ENCODE measurements at regions of chr5 and their contacts with region 1.

Region 1: GRCh38 chr5:32388432-32389129 is 56.0 kb downstream of the ZFR start:
- DNase-seq: no peak
- ATAC-seq: peak; percentile 75
- H3K4me3 Mint-ChIP-seq: no peak overlapping the region
- H3K27ac Mint-ChIP-seq: peak overlapping the region; percentile 88
- H3K4me1 Mint-ChIP-seq: peaks cover 11% of the 10 kb centered on the region
- H3K27me3 Mint-ChIP-seq: no peaks in the 10 kb centered on the region

Region 2: DNA sequence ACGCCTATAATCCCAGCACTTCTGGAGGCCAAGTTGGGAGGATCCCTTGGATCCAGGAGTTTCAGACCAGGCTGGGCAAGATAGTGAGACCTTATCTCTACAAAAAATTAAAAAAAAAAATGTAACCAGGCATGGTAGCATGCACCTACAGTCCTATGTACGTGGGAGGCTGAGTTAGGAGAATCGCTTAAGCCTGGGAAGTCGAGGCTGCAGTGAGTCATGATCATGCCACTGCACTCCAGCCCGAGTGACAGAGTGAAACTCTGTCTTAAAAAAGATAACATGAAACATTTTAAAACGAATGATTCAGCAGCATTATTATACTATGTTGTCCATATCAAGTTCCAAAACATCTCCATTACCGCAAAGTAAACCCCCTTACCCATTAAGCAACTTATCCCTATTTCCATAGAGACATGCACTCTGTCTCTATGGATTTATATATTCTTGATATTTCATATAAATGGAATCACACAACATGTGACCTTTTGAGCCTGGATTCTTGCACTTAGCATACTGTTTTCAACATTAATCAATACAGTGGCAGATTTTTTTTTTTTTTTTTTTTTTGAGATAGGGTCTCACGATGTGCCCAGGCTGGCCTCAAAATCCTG is 18.9 kb before region 1 on chr5:
- CTCF ChIA-PET with region 1: interaction called, 5 read pairs
- POLR2A ChIA-PET with region 1: no interaction called
- intact Hi-C with region 1: loop called in 1 of 2 experiments (anchors 2 kb)
- DNase-seq: no peak
- ATAC-seq: peak; percentile 16
- H3K4me3 Mint-ChIP-seq: no peak overlapping the region
- H3K27ac Mint-ChIP-seq: peak overlapping the region; percentile 69
- H3K4me1 Mint-ChIP-seq: peaks cover 4% of the 10 kb centered on the region
- H3K27me3 Mint-ChIP-seq: no peaks in the 10 kb centered on the region